HEK293 (cell line): ENCODE measurements at regions of chr1 and their contacts with region 1.

Region 1: GRCh38 chr1:92994105-92994712 is 32.9 kb upstream of the DIPK1A start:
- H3K4me3 ChIP-seq: no peak overlapping the region
- H3K27ac ChIP-seq: no peak overlapping the region
- H3K4me1 ChIP-seq: no peaks in the 10 kb centered on the region
- CTCF ChIP-seq: 0 out of 2 replicates have a peak, but pooled peaks have one; percentile 53

Region 2: DNA sequence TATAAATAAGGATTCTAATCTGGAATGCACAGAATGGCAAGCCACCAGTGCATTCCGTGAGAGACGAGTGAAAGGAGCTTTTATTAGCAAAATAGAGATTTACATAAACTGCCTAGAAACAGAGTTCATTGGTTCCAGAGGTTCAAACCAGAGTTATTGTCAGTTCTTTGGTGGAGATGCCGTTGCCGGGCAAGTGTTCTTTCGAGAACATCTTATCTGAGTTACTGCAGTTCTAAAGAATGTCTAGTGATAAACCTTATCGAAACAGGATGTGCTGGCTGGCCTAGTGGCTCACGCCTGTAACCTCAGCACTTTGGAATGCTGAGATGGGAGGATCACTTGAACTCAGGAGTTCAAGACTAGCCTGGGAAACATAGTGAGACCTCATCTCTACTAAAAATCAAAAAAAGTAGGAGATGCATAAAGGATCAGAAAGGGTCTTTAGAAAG is 189.5 kb before region 1 on chr1:
- CTCF ChIA-PET with region 1: no interaction called
- POLR2A ChIA-PET with region 1: no interaction called
- H3K4me3 ChIP-seq: no peak overlapping the region
- H3K27ac ChIP-seq: no peak overlapping the region
- H3K4me1 ChIP-seq: no peaks in the 10 kb centered on the region
- CTCF ChIP-seq: no peak

Region 3: GRCh38 chr1:92877792-92878191 is 116.4 kb before region 1 on chr1:
- CTCF ChIA-PET with region 1: interaction called, 23 read pairs
- POLR2A ChIA-PET with region 1: no interaction called
- H3K4me3 ChIP-seq: no peak overlapping the region
- H3K27ac ChIP-seq: no peak overlapping the region
- H3K4me1 ChIP-seq: 0 out of 2 replicates have a peak, but pooled peaks cover 9% of the 10 kb centered on the region
- CTCF ChIP-seq: no peak

Region 4: DNA sequence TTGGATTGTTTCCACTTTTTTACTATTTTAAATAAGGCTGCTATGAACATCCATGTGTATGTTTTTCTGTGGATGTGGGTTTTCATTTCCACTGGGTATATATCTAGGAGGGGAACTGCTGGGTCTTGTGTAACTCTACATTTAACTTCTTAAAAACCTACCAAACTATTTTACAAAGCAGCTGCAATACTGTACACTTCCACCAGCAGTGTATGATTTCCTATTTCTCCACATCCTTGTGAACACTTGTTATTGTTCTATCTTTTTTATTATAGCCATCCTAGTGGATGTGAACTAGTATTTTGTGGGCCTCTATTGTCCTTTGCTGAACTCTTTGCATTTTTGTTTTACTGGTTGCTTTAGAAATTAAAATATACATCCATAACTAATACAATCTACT is 66.3 kb before region 1 on chr1:
- CTCF ChIA-PET with region 1: interaction called, 14 read pairs
- POLR2A ChIA-PET with region 1: no interaction called
- H3K4me3 ChIP-seq: no peak overlapping the region
- H3K27ac ChIP-seq: no peak overlapping the region
- H3K4me1 ChIP-seq: no peaks in the 10 kb centered on the region
- CTCF ChIP-seq: no peak

Region 5: GRCh38 chr1:92975551-92976232 is 18.5 kb before region 1 on chr1:
- CTCF ChIA-PET with region 1: interaction called, 34 read pairs
- POLR2A ChIA-PET with region 1: no interaction called
- H3K4me3 ChIP-seq: no peak overlapping the region
- H3K27ac ChIP-seq: no peak overlapping the region
- H3K4me1 ChIP-seq: no peaks in the 10 kb centered on the region
- CTCF ChIP-seq: no peak

Region 6: GRCh38 chr1:93015590-93015989 is 21.4 kb after region 1 on chr1:
- CTCF ChIA-PET with region 1: interaction called, 22 read pairs
- POLR2A ChIA-PET with region 1: no interaction called
- H3K4me3 ChIP-seq: no peak overlapping the region
- H3K27ac ChIP-seq: no peak overlapping the region
- H3K4me1 ChIP-seq: no peaks in the 10 kb centered on the region
- CTCF ChIP-seq: no peak